ENCODE measurements at regions of chr1 and their contacts with region 1.

Region 1: GRCh38 chr1:180533266-180533987 is 25.3 kb upstream of the OVAAL start:
- DNase-seq: no peak
- ATAC-seq: peak; percentile 97
- H3K4me3 ChIP-seq: no peak overlapping the region
- H3K27ac ChIP-seq: no peak overlapping the region
- H3K4me1 ChIP-seq: no peaks in the 10 kb centered on the region
- H3K27me3 ChIP-seq: peaks cover 0 to 2% of the 10 kb centered on the region in 2 experiments; a peak in 2 of 4 replicates
- CTCF ChIP-seq: peak; percentile 82 to 95 (median 88)
- EP300 ChIP-seq: no peak
- POLR2A ChIP-seq: no peak
- RAD21 ChIP-seq: peak; percentile 91

Region 2: DNA sequence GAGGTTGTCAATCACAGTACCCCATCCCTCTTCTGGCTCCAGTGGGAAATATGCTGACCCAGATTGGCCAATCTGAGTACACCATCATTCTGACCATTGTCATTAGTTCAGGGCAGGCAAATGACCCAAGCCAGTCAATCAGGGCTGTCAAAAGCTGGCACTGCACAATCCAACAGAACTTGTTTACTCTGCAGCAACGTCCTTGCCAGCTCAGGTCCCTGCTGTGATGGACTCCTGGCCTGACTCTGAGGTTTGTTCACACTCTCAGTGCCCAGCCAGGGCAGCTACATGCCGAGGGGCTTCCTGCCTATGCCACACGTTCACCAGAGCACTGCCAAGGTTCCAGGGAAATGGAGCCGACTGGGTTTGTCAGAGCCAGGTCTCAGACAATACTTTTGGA is 10.6 kb after region 1 on chr1:
- CTCF ChIA-PET with region 1: interaction called, 11 read pairs
- POLR2A ChIA-PET with region 1: no interaction called
- RAD21 ChIA-PET with region 1: no interaction called
- SMC1A ChIA-PET with region 1: interaction called, 6 read pairs
- in situ Hi-C with region 1: no loop called
- intact Hi-C with region 1: no loop called
- DNase-seq: no peak
- ATAC-seq: no peak
- H3K4me3 ChIP-seq: no peak overlapping the region
- H3K27ac ChIP-seq: no peak overlapping the region
- H3K4me1 ChIP-seq: no peaks in the 10 kb centered on the region
- H3K27me3 ChIP-seq: no peaks in the 10 kb centered on the region; a peak in 1 of 4 replicates
- CTCF ChIP-seq: no peak
- EP300 ChIP-seq: no peak
- POLR2A ChIP-seq: no peak
- RAD21 ChIP-seq: no peak

Region 3: GRCh38 chr1:180631766-180632325 is 98.4 kb after region 1 on chr1 and contains the start of gene XPR1:
- CTCF ChIA-PET with region 1: interaction called, 4 read pairs
- POLR2A ChIA-PET with region 1: no interaction called
- RAD21 ChIA-PET with region 1: interaction called, 3 read pairs
- SMC1A ChIA-PET with region 1: interaction called, 10 read pairs
- in situ Hi-C with region 1: no loop called
- intact Hi-C with region 1: loop called (anchors 2 kb)
- DNase-seq: peak; percentile 95
- ATAC-seq: peak; percentile 96
- H3K4me3 ChIP-seq: peak within 1 kb of the TSS; percentile 89
- H3K27ac ChIP-seq: peak within 1 kb of the TSS; percentile 56
- H3K4me1 ChIP-seq: peaks cover 8% of the 10 kb centered on the region
- H3K27me3 ChIP-seq: no peaks in the 10 kb centered on the region
- CTCF ChIP-seq: peak; percentile 9 to 16 (median 10); a peak in 1 of 6 replicates
- EP300 ChIP-seq: no peak
- POLR2A ChIP-seq: peak; percentile 88
- RAD21 ChIP-seq: peak; percentile 26; the same call in 1 of the 2 replicates
- polyA plus RNA-seq, gene XPR1: 1.1 to 1.5 TPM

Region 4: DNA sequence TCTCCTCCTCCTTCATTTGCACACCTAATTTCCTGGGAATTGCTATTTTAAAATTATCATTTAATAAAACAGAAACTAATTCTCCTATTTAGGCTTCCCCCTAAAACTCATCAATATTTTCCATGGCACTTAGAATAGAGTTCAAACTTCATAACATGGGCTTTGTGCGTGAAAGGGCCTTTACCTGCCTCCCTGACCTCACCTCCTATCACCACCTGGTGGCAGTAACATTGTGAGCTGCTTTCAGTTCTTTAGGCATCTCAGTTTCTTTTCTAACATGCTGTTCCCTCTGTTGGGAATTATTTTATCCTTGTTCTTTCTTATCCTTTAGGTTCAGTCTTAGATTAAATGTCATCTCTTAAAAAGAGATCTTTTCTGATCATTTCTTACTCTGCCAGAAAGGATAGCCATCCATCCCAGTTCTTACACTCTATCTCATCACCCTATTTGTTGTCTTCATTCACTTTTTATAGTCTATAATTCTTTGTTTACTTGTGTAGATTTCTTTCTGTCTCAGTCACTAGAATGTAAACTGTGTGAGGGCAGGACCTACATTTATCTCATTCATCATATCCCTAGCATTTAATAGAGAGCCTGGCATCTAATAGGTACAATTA is 245.5 kb after region 1 on chr1:
- CTCF ChIA-PET with region 1: interaction called, 3 read pairs
- POLR2A ChIA-PET with region 1: no interaction called
- RAD21 ChIA-PET with region 1: interaction called, 4 read pairs
- SMC1A ChIA-PET with region 1: interaction called, 3 read pairs
- in situ Hi-C with region 1: no loop called
- intact Hi-C with region 1: loop called (anchors 2 kb)
- DNase-seq: no peak
- ATAC-seq: peak; percentile 80
- H3K4me3 ChIP-seq: no peak overlapping the region
- H3K27ac ChIP-seq: no peak overlapping the region
- H3K4me1 ChIP-seq: no peaks in the 10 kb centered on the region
- H3K27me3 ChIP-seq: no peaks in the 10 kb centered on the region
- CTCF ChIP-seq: peak; percentile 45 to 60 (median 58)
- EP300 ChIP-seq: no peak
- POLR2A ChIP-seq: no peak
- RAD21 ChIP-seq: peak; percentile 56

Region 5: GRCh38 chr1:180854478-180854877 is 321.1 kb after region 1 on chr1:
- CTCF ChIA-PET with region 1: interaction called, 3 read pairs
- POLR2A ChIA-PET with region 1: no interaction called
- RAD21 ChIA-PET with region 1: no interaction called
- SMC1A ChIA-PET with region 1: interaction called, 7 read pairs
- in situ Hi-C with region 1: loop called (anchors 5 kb)
- intact Hi-C with region 1: loop called (anchors 2 kb)
- DNase-seq: no peak
- ATAC-seq: no peak
- H3K4me3 ChIP-seq: no peak overlapping the region
- H3K27ac ChIP-seq: no peak overlapping the region
- H3K4me1 ChIP-seq: peaks cover 16% of the 10 kb centered on the region
- H3K27me3 ChIP-seq: no peaks in the 10 kb centered on the region
- CTCF ChIP-seq: no peak
- EP300 ChIP-seq: no peak
- POLR2A ChIP-seq: no peak
- RAD21 ChIP-seq: no peak

Measured in GM12878 (cell line).